Psoas muscle (tissue), 8 donors: ENCODE measurements at regions of chr2 and their contacts with region 1.

Region 1: GRCh38 chr2:64548761-64549160 is 24.6 kb downstream of the AFTPH start:
- DNase-seq: no peak
- ATAC-seq: peak in 1 of 4 donors; percentile 46
- H3K4me3 ChIP-seq: no peak overlapping the region
- H3K27ac ChIP-seq: no peak overlapping the region
- H3K4me1 ChIP-seq: peaks cover 8% of the 10 kb centered on the region
- H3K27me3 ChIP-seq: no peaks in the 10 kb centered on the region
- CTCF ChIP-seq: no peak

Region 2: GRCh38 chr2:64165706-64166105 is 383.1 kb before region 1 on chr2:
- intact Hi-C with region 1: loop called in 1 of 2 experiments (anchors 5 kb)
- DNase-seq: no peak
- ATAC-seq: no peak
- H3K4me3 ChIP-seq: no peak overlapping the region
- H3K27ac ChIP-seq: no peak overlapping the region
- H3K4me1 ChIP-seq: no peaks in the 10 kb centered on the region
- H3K27me3 ChIP-seq: no peaks in the 10 kb centered on the region
- CTCF ChIP-seq: no peak